ENCODE measurements at regions of chr13 and their contacts with region 1.

Region 1: GRCh38 chr13:95181586-95181985 is 119.7 kb downstream of the ABCC4 start:
- DNase-seq: no peak
- ATAC-seq: no peak
- H3K4me3 ChIP-seq: no peak overlapping the region
- H3K4me3 Mint-ChIP-seq: peak overlapping the region in 1 of 10 donors; percentile 39
- H3K27ac ChIP-seq: no peak overlapping the region
- H3K27ac Mint-ChIP-seq: peak overlapping the region in 7 of 9 donors; percentile 9 to 76 (median 35)
- H3K4me1 ChIP-seq: peaks cover 14 to 50% of the 10 kb centered on the region in 2 donors
- H3K4me1 Mint-ChIP-seq: peaks cover 40 to 95% (median 78%) of the 10 kb centered on the region in 7 donors
- H3K27me3 ChIP-seq: no peaks in the 10 kb centered on the region
- H3K27me3 Mint-ChIP-seq: no peaks in the 10 kb centered on the region

Region 2: DNA sequence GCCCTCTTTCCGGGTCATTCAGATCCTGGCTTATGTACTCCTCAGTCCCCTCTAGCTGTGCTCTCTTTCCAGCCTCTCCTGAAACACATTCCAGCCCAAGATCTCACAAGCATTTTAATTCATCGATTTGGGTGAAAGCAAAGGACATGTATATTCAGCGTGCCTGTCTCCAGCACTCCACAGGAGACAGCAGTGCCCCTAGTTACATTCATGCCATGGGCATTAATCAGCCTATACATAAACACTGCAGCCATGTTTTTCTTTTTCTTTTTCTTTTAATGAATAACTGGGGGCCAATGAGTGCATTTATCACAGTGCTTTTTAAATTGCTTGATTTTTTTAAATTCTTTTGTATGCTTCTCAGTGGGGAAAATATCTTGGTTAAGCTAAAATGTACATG is 901.2 kb before region 1 on chr13:
- CTCF ChIA-PET with region 1: no interaction called
- POLR2A ChIA-PET with region 1: no interaction called
- intact Hi-C with region 1: no loop called
- DNase-seq: no peak
- ATAC-seq: no peak
- H3K4me3 ChIP-seq: no peak overlapping the region
- H3K4me3 Mint-ChIP-seq: no peak overlapping the region
- H3K27ac ChIP-seq: no peak overlapping the region
- H3K27ac Mint-ChIP-seq: no peak overlapping the region
- H3K4me1 ChIP-seq: no peaks in the 10 kb centered on the region
- H3K4me1 Mint-ChIP-seq: no peaks in the 10 kb centered on the region
- H3K27me3 ChIP-seq: peaks cover 0 to 3% of the 10 kb centered on the region in 2 donors
- H3K27me3 Mint-ChIP-seq: peaks cover 0 to 20% (median 17%) of the 10 kb centered on the region in 5 donors

Region 3: GRCh38 chr13:94435604-94436226 is 745.9 kb before region 1 on chr13:
- CTCF ChIA-PET with region 1: no interaction called
- POLR2A ChIA-PET with region 1: no interaction called
- intact Hi-C with region 1: loop called (anchors 5 to 10 kb)
- DNase-seq: peak in 7 of 9 donors; percentile 18 to 63 (median 50)
- ATAC-seq: peak; percentile 73
- H3K4me3 ChIP-seq: no peak overlapping the region
- H3K4me3 Mint-ChIP-seq: no peak overlapping the region
- H3K27ac ChIP-seq: no peak overlapping the region
- H3K27ac Mint-ChIP-seq: no peak overlapping the region
- H3K4me1 ChIP-seq: no peaks in the 10 kb centered on the region
- H3K4me1 Mint-ChIP-seq: peaks cover 0 to 16% (median 0%) of the 10 kb centered on the region in 7 donors
- H3K27me3 ChIP-seq: no peaks in the 10 kb centered on the region
- H3K27me3 Mint-ChIP-seq: peaks cover 0 to 3% (median 0%) of the 10 kb centered on the region in 5 donors

Region 4: GRCh38 chr13:94595950-94596574 is 585.5 kb before region 1 on chr13 and contains the start of gene TGDS:
- CTCF ChIA-PET with region 1: no interaction called
- POLR2A ChIA-PET with region 1: no interaction called
- intact Hi-C with region 1: loop called (anchors 1 kb)
- DNase-seq: peak; percentile 71 to 89 (median 86)
- ATAC-seq: peak; percentile 99
- H3K4me3 ChIP-seq: peak within 1 kb of the TSS; percentile 92
- H3K4me3 Mint-ChIP-seq: peak within 1 kb of the TSS; percentile 92 to 99 (median 97)
- H3K27ac ChIP-seq: peak within 1 kb of the TSS; percentile 80
- H3K27ac Mint-ChIP-seq: peak within 1 kb of the TSS; percentile 83 to 96 (median 93)
- H3K4me1 ChIP-seq: peaks cover 16 to 19% of the 10 kb centered on the region in 2 donors
- H3K4me1 Mint-ChIP-seq: peaks cover 29 to 53% (median 41%) of the 10 kb centered on the region in 7 donors
- H3K27me3 ChIP-seq: no peaks in the 10 kb centered on the region
- H3K27me3 Mint-ChIP-seq: no peaks in the 10 kb centered on the region
- total RNA-seq, gene TGDS: 5.9 to 20.5 (median 13.7) TPM

Region 5: GRCh38 chr13:94601446-94602431 is 579.8 kb before region 1 on chr13 and contains the start of gene GPR180:
- CTCF ChIA-PET with region 1: no interaction called
- POLR2A ChIA-PET with region 1: no interaction called
- intact Hi-C with region 1: loop called (anchors 1 kb)
- DNase-seq: peak; percentile 67 to 92 (median 88)
- ATAC-seq: peak; percentile 99
- H3K4me3 ChIP-seq: peak within 1 kb of the TSS; percentile 58
- H3K4me3 Mint-ChIP-seq: peak within 1 kb of the TSS; percentile 79 to 90 (median 86)
- H3K27ac ChIP-seq: peak within 1 kb of the TSS; percentile 75
- H3K27ac Mint-ChIP-seq: peak within 1 kb of the TSS; percentile 82 to 90 (median 87)
- H3K4me1 ChIP-seq: peaks cover 0 to 10% of the 10 kb centered on the region in 2 donors
- H3K4me1 Mint-ChIP-seq: peaks cover 16 to 45% (median 32%) of the 10 kb centered on the region in 7 donors
- H3K27me3 ChIP-seq: no peaks in the 10 kb centered on the region
- H3K27me3 Mint-ChIP-seq: no peaks in the 10 kb centered on the region
- total RNA-seq, gene GPR180: 1.8 to 7.0 (median 5.4) TPM

Region 6: DNA sequence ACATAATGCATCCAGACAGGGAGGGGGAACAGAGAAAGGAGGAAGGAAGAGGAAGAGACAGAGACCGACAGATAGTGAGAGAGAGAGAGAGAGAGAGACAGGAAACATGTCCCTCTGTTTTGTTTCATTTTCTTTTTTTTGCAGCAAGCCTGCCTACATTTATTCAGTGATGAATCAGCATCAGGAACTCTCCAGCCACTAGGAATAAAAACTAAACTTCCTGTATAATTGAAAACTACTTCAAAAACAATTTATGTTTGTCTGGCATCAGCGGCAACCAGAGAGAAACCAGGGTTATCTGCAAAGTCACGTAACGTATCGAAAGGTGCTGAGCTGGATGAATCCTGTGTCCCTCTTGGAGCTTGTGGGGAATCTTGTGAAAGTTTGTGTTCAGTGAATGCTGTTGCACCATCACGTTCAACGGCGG is 320.6 kb before region 1 on chr13:
- CTCF ChIA-PET with region 1: no interaction called
- POLR2A ChIA-PET with region 1: no interaction called
- intact Hi-C with region 1: loop called in 1 of 2 experiments (anchors 10 kb)
- DNase-seq: peak in 5 of 9 donors; percentile 5 to 27 (median 12)
- ATAC-seq: peak; percentile 43
- H3K4me3 ChIP-seq: peak overlapping the region; percentile 61
- H3K4me3 Mint-ChIP-seq: peak overlapping the region; percentile 86 to 95 (median 88)
- H3K27ac ChIP-seq: peak overlapping the region; percentile 18
- H3K27ac Mint-ChIP-seq: peak overlapping the region; percentile 71 to 93 (median 81)
- H3K4me1 ChIP-seq: peaks cover 4 to 7% of the 10 kb centered on the region in 2 donors
- H3K4me1 Mint-ChIP-seq: peaks cover 4 to 24% (median 18%) of the 10 kb centered on the region in 7 donors
- H3K27me3 ChIP-seq: no peaks in the 10 kb centered on the region
- H3K27me3 Mint-ChIP-seq: peaks cover 0 to 17% (median 5%) of the 10 kb centered on the region in 5 donors

Region 7: DNA sequence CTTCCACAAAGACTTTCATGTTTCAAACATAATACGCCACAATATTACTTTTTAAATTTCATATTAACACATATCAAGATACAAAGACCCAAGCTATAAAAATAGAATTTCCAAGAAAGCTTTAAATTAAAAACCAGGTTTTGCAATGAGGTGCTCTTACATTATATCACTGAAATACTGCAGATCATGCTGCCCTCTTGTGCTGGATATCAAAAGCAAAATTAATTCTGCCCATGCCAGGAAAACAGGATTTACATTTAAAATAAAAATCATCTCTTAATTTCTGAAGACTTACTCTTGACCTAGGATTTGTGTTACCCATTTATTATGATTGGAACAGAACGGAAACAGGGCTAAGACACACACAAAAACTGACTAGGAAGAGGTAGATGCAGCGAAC is 25.4 kb before region 1 on chr13:
- CTCF ChIA-PET with region 1: no interaction called
- POLR2A ChIA-PET with region 1: no interaction called
- intact Hi-C with region 1: loop called in 1 of 2 experiments (anchors 2 kb)
- DNase-seq: no peak
- ATAC-seq: no peak
- H3K4me3 ChIP-seq: no peak overlapping the region
- H3K4me3 Mint-ChIP-seq: no peak overlapping the region
- H3K27ac ChIP-seq: no peak overlapping the region
- H3K27ac Mint-ChIP-seq: peak overlapping the region in 3 of 9 donors; percentile 42 to 76 (median 60)
- H3K4me1 ChIP-seq: no peaks in the 10 kb centered on the region
- H3K4me1 Mint-ChIP-seq: peaks cover 0 to 6% (median 3%) of the 10 kb centered on the region in 7 donors
- H3K27me3 ChIP-seq: no peaks in the 10 kb centered on the region
- H3K27me3 Mint-ChIP-seq: no peaks in the 10 kb centered on the region

Measured in naive thymus-derived CD4-positive, alpha-beta T cell (primary cell).